H1 (cell line): ENCODE measurements at regions of chr9 and their contacts with region 1.

Region 1: DNA sequence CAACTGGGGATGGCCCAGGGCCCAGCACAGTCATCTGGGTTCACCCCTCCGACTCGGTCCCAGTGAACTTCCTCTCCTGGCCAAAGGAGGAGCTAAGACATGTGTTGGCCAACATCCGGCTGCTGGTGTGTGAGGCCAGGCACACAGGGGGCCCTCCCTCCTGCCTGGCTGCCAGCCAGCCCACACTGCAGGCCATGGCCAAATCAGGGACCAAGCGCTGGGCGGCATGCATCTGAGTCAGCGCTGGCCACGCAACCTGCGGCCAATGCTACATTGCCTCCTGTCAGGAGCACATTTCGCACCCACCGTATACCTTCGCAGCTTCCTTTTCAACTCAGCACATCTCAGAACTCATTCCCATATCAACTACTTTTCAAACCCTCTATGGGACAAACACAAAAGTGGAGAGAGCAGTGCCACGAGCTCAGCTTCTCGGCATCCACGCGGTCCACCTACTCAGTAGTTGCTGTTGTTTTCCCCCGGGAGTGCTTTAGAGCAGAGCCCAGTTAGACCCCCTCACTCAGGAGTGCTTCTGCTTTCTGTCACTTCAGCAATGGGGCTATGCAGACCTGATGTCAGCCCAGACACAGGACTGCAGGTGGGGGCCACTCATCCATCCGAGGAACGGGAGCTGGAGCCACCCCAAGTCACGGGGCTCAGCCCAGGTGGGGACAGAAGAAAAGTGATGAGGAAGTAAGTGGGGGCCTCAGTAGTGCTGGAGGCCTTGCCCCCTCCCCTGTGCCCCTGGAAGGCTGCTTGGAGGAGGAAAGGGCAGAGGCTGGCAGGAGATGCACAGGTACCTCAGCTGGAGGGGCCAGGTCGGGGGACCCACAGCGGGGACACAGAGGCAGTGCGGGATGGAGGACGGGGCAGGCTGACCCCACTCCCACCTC is 13.9 kb downstream of the NINJ1 start:
- DNase-seq: no peak
- H3K4me3 ChIP-seq: no peak overlapping the region
- H3K27ac ChIP-seq: no peak overlapping the region; the same call in 1 of the 2 replicates
- H3K4me1 ChIP-seq: peaks cover 0 to 9% (median 7%) of the 10 kb centered on the region in 4 experiments; a peak in 6 of 7 replicates
- H3K27me3 ChIP-seq: no peaks in the 10 kb centered on the region; a peak in 1 of 7 replicates
- CTCF ChIP-seq: peak in 2 of 3 experiments; percentile 27 to 49; a peak in 2 of 4 replicates
- EP300 ChIP-seq: no peak
- POLR2A ChIP-seq: no peak
- RAD21 ChIP-seq: peak; percentile 24 to 45; a peak in 3 of 4 replicates

Region 2: GRCh38 chr9:93134015-93134739 is 14.0 kb after region 1 on chr9 and contains the start of gene NINJ1:
- CTCF ChIA-PET with region 1: interaction called, 14 read pairs
- POLR2A ChIA-PET with region 1: interaction called, 9 read pairs
- DNase-seq: peak in 1 of 2 experiments; percentile 85
- H3K4me3 ChIP-seq: peak within 1 kb of the TSS; percentile 71 to 86 (median 72)
- H3K27ac ChIP-seq: peak within 1 kb of the TSS; percentile 58; the same call in 1 of the 2 replicates
- H3K4me1 ChIP-seq: peaks cover 0 to 32% (median 18%) of the 10 kb centered on the region in 4 experiments; a peak in 6 of 7 replicates
- H3K27me3 ChIP-seq: peaks cover 0 to 13% (median 10%) of the 10 kb centered on the region in 4 experiments; a peak in 5 of 7 replicates
- CTCF ChIP-seq: no peak
- EP300 ChIP-seq: no peak
- POLR2A ChIP-seq: peak in 1 of 2 experiments; percentile 61; a peak in 2 of 3 replicates
- RAD21 ChIP-seq: no peak
- total RNA-seq, gene NINJ1: 28.2 TPM in 2 replicates

Region 3: DNA sequence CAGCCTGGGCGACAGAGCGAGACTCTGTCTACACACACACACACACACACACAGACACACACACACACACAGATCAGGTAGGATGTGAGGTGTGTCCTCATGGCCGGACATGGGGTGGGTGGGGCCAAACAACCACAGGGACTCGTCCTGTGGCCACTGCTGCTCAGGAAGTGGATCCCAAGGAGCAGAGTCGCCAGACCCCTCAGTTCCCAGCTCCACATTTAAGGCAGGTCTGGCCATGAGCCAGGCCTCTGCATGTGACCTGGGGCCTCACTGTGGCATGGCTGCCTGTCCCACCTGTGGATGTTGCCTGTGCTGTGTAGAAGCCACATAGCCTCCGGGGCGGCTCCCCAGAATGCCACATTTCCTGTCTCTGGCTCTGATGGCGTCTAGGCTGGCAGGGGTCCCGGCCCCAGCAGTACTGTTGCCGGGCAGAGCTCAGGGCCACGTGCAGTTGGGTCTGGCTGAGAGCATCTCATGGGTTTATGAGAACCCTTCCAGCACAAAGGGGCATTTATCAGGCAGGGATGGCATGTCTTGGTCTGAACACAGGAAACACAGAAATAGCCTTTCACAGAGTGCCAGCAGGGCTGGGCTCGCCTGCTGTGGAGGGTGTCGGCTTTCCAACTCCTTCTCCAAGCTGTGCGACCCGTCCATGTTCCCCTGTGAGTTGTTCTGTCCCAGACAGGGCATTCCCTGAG is 23.8 kb after region 1 on chr9:
- CTCF ChIA-PET with region 1: interaction called, 11 read pairs
- POLR2A ChIA-PET with region 1: no interaction called
- DNase-seq: no peak
- H3K4me3 ChIP-seq: no peak overlapping the region
- H3K27ac ChIP-seq: no peak overlapping the region
- H3K4me1 ChIP-seq: peaks cover 0 to 8% (median 3%) of the 10 kb centered on the region in 4 experiments; a peak in 2 of 7 replicates
- H3K27me3 ChIP-seq: no peaks in the 10 kb centered on the region
- CTCF ChIP-seq: no peak
- EP300 ChIP-seq: no peak
- POLR2A ChIP-seq: no peak
- RAD21 ChIP-seq: no peak

Region 4: DNA sequence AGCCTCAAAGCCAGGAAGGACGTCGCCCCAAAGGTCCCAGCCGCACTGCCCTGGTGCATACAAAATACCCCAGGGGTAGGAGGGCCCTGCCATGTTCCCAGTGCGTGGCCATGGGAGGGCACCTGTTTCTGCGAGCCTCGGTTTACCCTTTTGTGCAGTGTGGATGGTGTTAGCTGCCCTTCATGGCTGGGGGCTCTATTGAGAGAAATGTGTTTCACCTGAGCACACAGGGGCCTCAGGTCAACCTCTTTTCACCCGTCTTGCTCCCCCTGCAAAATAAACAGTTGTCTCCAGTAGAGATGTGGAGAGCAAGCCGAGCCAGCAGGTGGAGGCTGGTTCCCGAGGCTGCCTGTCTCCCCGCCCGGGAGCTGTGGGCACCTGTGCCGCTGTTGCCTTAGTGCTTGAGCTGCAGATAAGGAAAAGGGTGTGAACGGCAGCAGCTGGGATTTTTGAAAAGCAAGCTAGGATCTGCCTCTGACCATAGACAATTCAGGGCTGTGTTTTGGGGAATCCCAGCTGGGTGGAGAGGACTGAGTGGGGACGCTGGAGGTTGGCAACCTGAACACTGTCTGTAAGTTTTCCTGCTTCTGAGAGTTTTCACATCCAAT is 73.1 kb after region 1 on chr9:
- CTCF ChIA-PET with region 1: no interaction called
- POLR2A ChIA-PET with region 1: no interaction called
- DNase-seq: no peak
- H3K4me3 ChIP-seq: no peak overlapping the region
- H3K27ac ChIP-seq: no peak overlapping the region
- H3K4me1 ChIP-seq: peaks cover 0 to 16% (median 8%) of the 10 kb centered on the region in 4 experiments; a peak in 6 of 7 replicates
- H3K27me3 ChIP-seq: no peaks in the 10 kb centered on the region
- CTCF ChIP-seq: no peak
- EP300 ChIP-seq: no peak
- POLR2A ChIP-seq: no peak
- RAD21 ChIP-seq: no peak

Region 5: GRCh38 chr9:93207326-93207814 is 87.2 kb after region 1 on chr9:
- CTCF ChIA-PET with region 1: no interaction called
- POLR2A ChIA-PET with region 1: no interaction called
- DNase-seq: no peak
- H3K4me3 ChIP-seq: no peak overlapping the region
- H3K27ac ChIP-seq: no peak overlapping the region
- H3K4me1 ChIP-seq: peaks cover 0 to 6% (median 2%) of the 10 kb centered on the region in 4 experiments; a peak in 2 of 7 replicates
- H3K27me3 ChIP-seq: no peaks in the 10 kb centered on the region
- CTCF ChIP-seq: no peak
- EP300 ChIP-seq: no peak
- POLR2A ChIP-seq: no peak
- RAD21 ChIP-seq: no peak

Region 6: DNA sequence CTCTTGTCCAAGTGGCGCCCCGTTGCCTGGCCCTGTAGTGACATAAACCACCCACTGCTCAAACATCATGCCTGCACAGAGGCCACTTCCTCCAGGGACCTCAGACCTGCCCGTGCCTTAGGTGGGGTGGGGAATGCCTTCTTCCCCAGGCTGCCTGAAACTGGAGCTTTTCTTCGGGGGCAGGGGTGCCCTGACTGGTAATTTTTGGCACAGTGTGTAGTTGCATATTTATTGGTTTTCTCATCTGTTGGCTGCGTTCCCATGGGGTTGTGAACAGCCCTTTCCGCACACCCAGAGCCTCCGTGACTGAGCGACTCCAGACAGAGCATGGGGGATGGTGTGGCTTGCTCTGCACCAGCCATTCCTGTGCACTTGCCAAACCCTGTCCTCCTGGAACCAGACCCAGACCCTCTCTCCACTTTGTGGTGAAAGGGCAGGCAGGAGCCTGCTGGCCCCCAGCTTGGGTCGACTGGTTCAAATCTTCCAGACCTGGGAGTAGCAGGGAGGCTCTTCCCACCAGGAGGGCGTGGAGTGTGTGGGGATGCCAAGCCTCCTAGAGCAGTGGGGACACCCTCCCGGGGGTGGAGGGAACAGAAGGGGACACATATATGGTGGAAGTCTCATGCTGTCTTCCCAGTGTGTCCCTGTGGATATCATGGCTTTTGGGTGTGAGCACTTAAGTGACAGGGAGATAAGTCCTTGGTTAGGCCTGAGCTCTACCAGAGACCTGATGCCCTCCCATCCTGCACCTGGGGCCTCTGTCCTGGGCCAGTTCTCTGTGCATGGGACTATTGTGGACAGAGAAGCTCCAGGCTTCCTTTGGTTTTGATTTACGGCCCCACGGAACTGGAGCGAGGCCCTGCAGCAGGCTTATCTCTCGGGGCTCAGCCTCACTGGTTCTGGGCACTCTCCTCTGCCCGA is 103.3 kb after region 1 on chr9:
- CTCF ChIA-PET with region 1: no interaction called
- POLR2A ChIA-PET with region 1: no interaction called
- DNase-seq: no peak
- H3K4me3 ChIP-seq: no peak overlapping the region
- H3K27ac ChIP-seq: no peak overlapping the region
- H3K4me1 ChIP-seq: peaks cover 0 to 15% (median 9%) of the 10 kb centered on the region in 4 experiments; a peak in 6 of 7 replicates
- H3K27me3 ChIP-seq: no peaks in the 10 kb centered on the region
- CTCF ChIP-seq: no peak
- EP300 ChIP-seq: no peak
- POLR2A ChIP-seq: no peak
- RAD21 ChIP-seq: no peak

Region 7: DNA sequence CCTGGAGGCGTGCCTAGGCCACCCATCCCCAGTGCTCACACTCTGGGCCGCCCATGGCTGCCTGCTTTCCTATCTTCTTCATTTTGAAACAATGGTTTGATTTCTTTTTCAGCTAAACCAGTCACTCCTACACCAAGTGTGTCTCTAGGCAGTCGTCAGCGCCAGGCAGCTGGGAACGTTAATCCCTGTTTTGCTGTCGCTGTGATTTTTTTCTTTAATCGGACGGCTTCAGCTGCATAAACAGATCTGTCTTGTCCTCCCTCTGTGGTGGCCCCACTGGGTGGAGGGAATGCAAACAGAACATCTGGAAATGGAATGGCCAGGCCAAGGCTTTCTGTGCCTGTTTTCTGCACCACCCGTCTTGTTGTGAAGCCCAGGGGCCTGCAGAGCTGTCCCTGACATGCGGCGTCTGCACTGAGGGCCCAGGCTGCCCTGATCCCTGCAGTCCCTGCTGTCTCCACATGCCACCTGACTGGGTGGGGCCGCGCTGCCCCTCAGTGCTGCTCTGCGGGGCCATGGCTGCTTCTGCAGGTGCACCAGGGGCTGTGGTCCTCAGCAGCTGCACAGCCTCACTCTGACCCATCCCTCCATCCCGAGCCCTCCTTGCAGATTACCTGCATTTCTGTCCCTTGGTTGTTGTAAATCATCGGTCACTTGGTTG is 115.2 kb after region 1 on chr9:
- CTCF ChIA-PET with region 1: no interaction called
- POLR2A ChIA-PET with region 1: no interaction called
- DNase-seq: no peak
- H3K4me3 ChIP-seq: no peak overlapping the region
- H3K27ac ChIP-seq: no peak overlapping the region
- H3K4me1 ChIP-seq: peaks cover 0 to 3% (median 0%) of the 10 kb centered on the region in 4 experiments; a peak in 1 of 7 replicates
- H3K27me3 ChIP-seq: no peaks in the 10 kb centered on the region
- CTCF ChIP-seq: no peak
- EP300 ChIP-seq: no peak
- POLR2A ChIP-seq: no peak
- RAD21 ChIP-seq: no peak